ENCODE measurements at regions of chr10 and their contacts with region 1.

Region 1: GRCh38 chr10:94213001-94213530 is 149.7 kb downstream of the NOC3L start:
- DNase-seq: peak; percentile 37 to 73
- ATAC-seq: peak; percentile 91 to 95 (median 94)
- H3K4me3 ChIP-seq: no peak overlapping the region
- H3K27ac ChIP-seq: peak overlapping the region; percentile 83
- H3K4me1 ChIP-seq: peaks cover 48% of the 10 kb centered on the region
- H3K27me3 ChIP-seq: no peaks in the 10 kb centered on the region
- CTCF ChIP-seq: no peak

Region 2: DNA sequence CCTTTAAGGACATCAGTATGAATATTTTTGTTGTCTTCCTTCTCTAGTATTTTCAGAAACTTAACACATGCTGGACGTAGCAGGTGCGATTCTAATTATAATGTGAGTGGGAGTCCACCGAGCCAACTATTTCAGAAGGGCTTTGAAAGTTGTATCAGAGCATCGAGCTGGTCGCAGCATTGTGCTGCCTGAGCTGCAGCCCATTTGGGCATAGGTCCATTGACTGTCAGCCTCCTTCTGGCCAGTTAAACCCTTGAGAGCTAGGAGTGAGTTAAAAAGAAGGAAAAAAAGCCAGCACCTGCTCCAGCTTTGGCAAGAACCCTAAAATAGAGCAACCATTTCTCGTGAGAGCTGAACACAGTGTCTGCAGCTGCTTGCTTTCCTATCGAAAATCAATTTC is 271.5 kb before region 1 on chr10:
- intact Hi-C with region 1: loop called in 1 of 2 experiments (anchors 2 kb)
- DNase-seq: no peak
- ATAC-seq: peak; percentile 80 to 92 (median 92)
- H3K4me3 ChIP-seq: peak overlapping the region; percentile 19
- H3K27ac ChIP-seq: peak overlapping the region; percentile 73
- H3K4me1 ChIP-seq: peaks cover 35% of the 10 kb centered on the region
- H3K27me3 ChIP-seq: no peaks in the 10 kb centered on the region
- CTCF ChIP-seq: no peak

Region 3: GRCh38 chr10:93993782-93994437 is 219.2 kb before region 1 on chr10 and contains the start of gene PLCE1:
- intact Hi-C with region 1: loop called in 1 of 2 experiments (anchors 10 kb)
- DNase-seq: peak; percentile 70 to 85
- ATAC-seq: peak; percentile 86 to 88 (median 86)
- H3K4me3 ChIP-seq: peak within 1 kb of the TSS; percentile 81
- H3K27ac ChIP-seq: peak within 1 kb of the TSS; percentile 86
- H3K4me1 ChIP-seq: peaks cover 26% of the 10 kb centered on the region
- H3K27me3 ChIP-seq: no peaks in the 10 kb centered on the region
- CTCF ChIP-seq: peak; percentile 10
- total RNA-seq, gene PLCE1: 2.8 to 11.5 (median 5.8) TPM

Region 4: DNA sequence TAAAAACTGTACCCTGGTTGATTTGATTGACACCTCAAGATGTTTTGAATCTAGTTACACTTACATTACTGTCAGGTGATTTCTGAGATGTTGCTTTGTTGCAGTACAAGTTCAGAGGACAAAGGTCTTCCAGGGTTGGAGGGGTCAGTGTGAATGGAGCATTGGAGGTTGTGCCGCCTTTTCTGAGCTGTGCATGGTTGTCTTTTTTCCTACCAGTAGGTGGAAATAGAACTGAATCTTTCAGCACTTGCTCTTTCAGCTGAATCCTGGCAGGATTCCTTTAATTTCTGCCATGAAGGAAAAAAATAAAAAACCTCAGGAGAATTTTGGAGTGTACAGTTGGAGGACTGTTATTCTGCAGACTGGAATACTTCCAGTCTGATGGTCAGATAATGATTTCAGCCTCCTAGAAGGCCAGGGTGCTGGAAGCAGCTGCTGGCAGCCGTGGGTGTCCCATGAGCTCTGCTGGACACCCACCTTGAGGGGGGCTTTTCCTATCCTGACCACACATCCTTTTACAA is 136.7 kb before region 1 on chr10:
- intact Hi-C with region 1: loop called in 1 of 2 experiments (anchors 10 kb)
- DNase-seq: no peak
- ATAC-seq: peak; percentile 56 to 86 (median 60)
- H3K4me3 ChIP-seq: no peak overlapping the region
- H3K27ac ChIP-seq: no peak overlapping the region
- H3K4me1 ChIP-seq: peaks cover 13% of the 10 kb centered on the region
- H3K27me3 ChIP-seq: no peaks in the 10 kb centered on the region
- CTCF ChIP-seq: peak; percentile 54

Region 5: GRCh38 chr10:94133239-94133638 is 79.8 kb before region 1 on chr10:
- intact Hi-C with region 1: loop called in 1 of 2 experiments (anchors 5 kb)
- DNase-seq: peak; percentile 61 to 87
- ATAC-seq: peak; percentile 93 to 99 (median 96)
- H3K4me3 ChIP-seq: no peak overlapping the region
- H3K27ac ChIP-seq: peak overlapping the region; percentile 5
- H3K4me1 ChIP-seq: peaks cover 21% of the 10 kb centered on the region
- H3K27me3 ChIP-seq: no peaks in the 10 kb centered on the region
- CTCF ChIP-seq: no peak

Region 6: GRCh38 chr10:94344522-94345122 is 131.6 kb after region 1 on chr10:
- intact Hi-C with region 1: no loop called
- DNase-seq: no peak
- ATAC-seq: no peak
- H3K4me3 ChIP-seq: no peak overlapping the region
- H3K27ac ChIP-seq: no peak overlapping the region
- H3K4me1 ChIP-seq: no peaks in the 10 kb centered on the region
- H3K27me3 ChIP-seq: no peaks in the 10 kb centered on the region
- CTCF ChIP-seq: no peak